Endothelial cell of umbilical vein (primary cell): ENCODE measurements at regions of chr20 and their contacts with region 1.

Region 1: DNA sequence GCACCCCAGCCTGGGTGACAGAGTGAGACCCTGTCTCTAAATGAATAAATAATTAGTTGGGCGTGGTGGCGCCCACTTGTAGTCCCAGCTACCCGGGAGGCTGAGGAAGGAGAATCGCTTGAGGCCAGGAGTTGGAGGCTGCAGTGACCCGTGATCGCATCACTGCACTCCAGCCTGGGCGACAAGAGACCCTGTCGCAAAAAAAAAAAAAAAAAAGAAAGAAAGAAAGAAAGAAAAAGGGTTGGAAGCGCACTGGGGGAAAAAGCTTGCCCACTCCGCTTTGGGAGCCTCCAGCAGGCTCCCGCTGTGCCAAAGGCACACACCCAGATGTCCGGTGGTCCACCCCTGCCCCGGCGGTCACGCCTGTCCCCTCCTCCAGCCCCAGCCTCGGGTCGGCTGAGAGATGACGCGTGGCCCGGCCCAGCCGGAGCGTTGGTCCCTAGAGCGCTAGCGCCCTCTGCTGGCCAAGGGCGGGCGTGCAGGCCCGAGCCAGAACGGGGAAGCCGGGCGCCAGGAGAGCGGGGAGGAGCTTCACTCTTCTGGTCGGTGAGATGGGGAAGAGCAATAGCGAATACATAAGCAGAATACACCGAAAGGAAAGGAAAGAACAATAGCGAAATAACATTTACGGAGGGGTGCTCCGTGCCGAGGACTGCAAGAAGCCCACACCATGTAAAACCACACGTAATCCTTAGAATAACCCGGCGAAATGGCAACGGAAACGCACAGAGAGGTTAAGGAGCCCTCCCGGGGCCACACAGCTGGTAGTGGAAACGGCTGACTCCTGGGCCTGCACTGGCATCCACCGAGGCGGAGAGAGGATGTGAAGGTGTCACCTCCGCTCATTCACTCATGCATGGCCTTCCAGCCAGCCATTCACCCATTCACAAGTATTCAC is 41.7 kb downstream of the UBE2V1 start:
- DNase-seq: peak; percentile 85
- H3K4me3 ChIP-seq: peak overlapping the region in 1 of 3 experiments; percentile 32
- H3K27ac ChIP-seq: no peak overlapping the region
- H3K4me1 ChIP-seq: no peaks in the 10 kb centered on the region
- H3K27me3 ChIP-seq: no peaks in the 10 kb centered on the region
- CTCF ChIP-seq: peak; percentile 99 to 100
- POLR2A ChIP-seq: no peak

Region 2: GRCh38 chr20:49699200-49699992 is 371.8 kb before region 1 on chr20:
- CTCF ChIA-PET with region 1: no interaction called
- POLR2A ChIA-PET with region 1: no interaction called
- dilution Hi-C with region 1: no loop called
- intact Hi-C with region 1: no loop called
- DNase-seq: peak; percentile 57
- H3K4me3 ChIP-seq: no peak overlapping the region
- H3K27ac ChIP-seq: peak overlapping the region; percentile 98
- H3K4me1 ChIP-seq: peaks cover 73% of the 10 kb centered on the region
- H3K27me3 ChIP-seq: no peaks in the 10 kb centered on the region
- CTCF ChIP-seq: no peak
- POLR2A ChIP-seq: no peak

Region 3: GRCh38 chr20:49915378-49916145 is 155.7 kb before region 1 on chr20 and contains the start of gene SPATA2:
- CTCF ChIA-PET with region 1: interaction called, 10 read pairs
- POLR2A ChIA-PET with region 1: no interaction called
- dilution Hi-C with region 1: no loop called
- intact Hi-C with region 1: no loop called
- DNase-seq: peak; percentile 94
- H3K4me3 ChIP-seq: peak within 1 kb of the TSS; percentile 54 to 89 (median 68)
- H3K27ac ChIP-seq: peak within 1 kb of the TSS; percentile 86
- H3K4me1 ChIP-seq: peaks cover 17% of the 10 kb centered on the region
- H3K27me3 ChIP-seq: no peaks in the 10 kb centered on the region
- CTCF ChIP-seq: no peak
- POLR2A ChIP-seq: peak; percentile 83
- total RNA-seq, gene SPATA2: 6.1 TPM in 2 replicates

Region 4: GRCh38 chr20:49964964-49965780 is 106.1 kb before region 1 on chr20:
- CTCF ChIA-PET with region 1: interaction called, 1,187 read pairs
- POLR2A ChIA-PET with region 1: no interaction called
- dilution Hi-C with region 1: no loop called
- intact Hi-C with region 1: no loop called
- DNase-seq: peak; percentile 49
- H3K4me3 ChIP-seq: no peak overlapping the region
- H3K27ac ChIP-seq: no peak overlapping the region
- H3K4me1 ChIP-seq: peaks cover 7% of the 10 kb centered on the region
- H3K27me3 ChIP-seq: no peaks in the 10 kb centered on the region
- CTCF ChIP-seq: peak; percentile 75 to 86
- POLR2A ChIP-seq: no peak

Region 5: GRCh38 chr20:50020288-50020687 is 51.0 kb before region 1 on chr20:
- CTCF ChIA-PET with region 1: interaction called, 11 read pairs
- POLR2A ChIA-PET with region 1: no interaction called
- dilution Hi-C with region 1: no loop called
- intact Hi-C with region 1: no loop called
- DNase-seq: peak; percentile 65
- H3K4me3 ChIP-seq: no peak overlapping the region
- H3K27ac ChIP-seq: peak overlapping the region; percentile 71
- H3K4me1 ChIP-seq: peaks cover 21% of the 10 kb centered on the region
- H3K27me3 ChIP-seq: no peaks in the 10 kb centered on the region
- CTCF ChIP-seq: no peak
- POLR2A ChIP-seq: no peak

Region 6: DNA sequence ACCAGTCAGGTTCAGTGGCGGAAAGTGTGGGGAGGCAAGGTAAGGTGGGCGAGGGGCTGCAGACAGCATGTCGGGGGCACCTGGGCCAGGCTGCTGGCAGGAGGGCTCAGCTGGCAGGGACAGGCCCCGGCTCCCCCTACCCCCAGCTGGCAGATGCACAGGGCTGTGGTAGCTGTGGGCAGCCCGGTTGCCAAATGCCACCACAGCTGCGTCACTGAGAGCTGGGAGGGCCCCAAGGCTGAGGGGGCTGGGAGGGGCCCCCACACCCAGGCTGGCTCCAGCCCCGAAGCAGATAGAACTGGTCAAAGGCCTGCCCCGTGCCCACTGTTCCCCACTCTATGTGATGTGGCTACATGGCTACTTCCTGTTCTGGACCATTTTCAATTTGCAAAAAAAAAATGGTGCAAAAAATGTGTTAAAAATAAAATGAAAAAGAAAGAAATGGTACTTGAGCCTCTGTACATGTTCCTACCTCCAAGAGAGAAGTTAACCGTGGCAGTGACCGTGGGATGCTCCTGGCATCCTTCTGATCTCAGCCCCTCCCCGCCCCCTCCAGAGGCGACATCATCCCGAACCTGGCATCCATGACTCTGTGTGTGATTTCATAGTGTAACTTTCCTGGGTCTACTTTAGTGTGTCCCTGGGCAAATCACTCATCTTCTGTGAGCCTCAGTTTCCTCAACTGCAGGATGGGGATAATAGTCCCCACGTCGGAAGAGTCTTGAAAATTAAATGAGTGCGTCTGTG is 22.6 kb before region 1 on chr20:
- CTCF ChIA-PET with region 1: interaction called, 20 read pairs
- POLR2A ChIA-PET with region 1: no interaction called
- dilution Hi-C with region 1: no loop called
- intact Hi-C with region 1: loop called (anchors 2 kb)
- DNase-seq: no peak
- H3K4me3 ChIP-seq: no peak overlapping the region
- H3K27ac ChIP-seq: peak overlapping the region; percentile 96
- H3K4me1 ChIP-seq: peaks cover 26% of the 10 kb centered on the region
- H3K27me3 ChIP-seq: no peaks in the 10 kb centered on the region
- CTCF ChIP-seq: no peak
- POLR2A ChIP-seq: no peak

Region 7: GRCh38 chr20:50101281-50101680 is 30.0 kb after region 1 on chr20:
- CTCF ChIA-PET with region 1: interaction called, 20 read pairs
- POLR2A ChIA-PET with region 1: no interaction called
- dilution Hi-C with region 1: no loop called
- intact Hi-C with region 1: no loop called
- DNase-seq: no peak
- H3K4me3 ChIP-seq: no peak overlapping the region
- H3K27ac ChIP-seq: no peak overlapping the region
- H3K4me1 ChIP-seq: peaks cover 17% of the 10 kb centered on the region
- H3K27me3 ChIP-seq: no peaks in the 10 kb centered on the region
- CTCF ChIP-seq: no peak
- POLR2A ChIP-seq: no peak

Region 8: GRCh38 chr20:50129662-50130355 is 58.6 kb after region 1 on chr20:
- CTCF ChIA-PET with region 1: no interaction called
- POLR2A ChIA-PET with region 1: no interaction called
- dilution Hi-C with region 1: no loop called
- intact Hi-C with region 1: no loop called
- DNase-seq: no peak
- H3K4me3 ChIP-seq: no peak overlapping the region
- H3K27ac ChIP-seq: no peak overlapping the region
- H3K4me1 ChIP-seq: no peaks in the 10 kb centered on the region
- H3K27me3 ChIP-seq: no peaks in the 10 kb centered on the region
- CTCF ChIP-seq: no peak
- POLR2A ChIP-seq: no peak

Region 9: DNA sequence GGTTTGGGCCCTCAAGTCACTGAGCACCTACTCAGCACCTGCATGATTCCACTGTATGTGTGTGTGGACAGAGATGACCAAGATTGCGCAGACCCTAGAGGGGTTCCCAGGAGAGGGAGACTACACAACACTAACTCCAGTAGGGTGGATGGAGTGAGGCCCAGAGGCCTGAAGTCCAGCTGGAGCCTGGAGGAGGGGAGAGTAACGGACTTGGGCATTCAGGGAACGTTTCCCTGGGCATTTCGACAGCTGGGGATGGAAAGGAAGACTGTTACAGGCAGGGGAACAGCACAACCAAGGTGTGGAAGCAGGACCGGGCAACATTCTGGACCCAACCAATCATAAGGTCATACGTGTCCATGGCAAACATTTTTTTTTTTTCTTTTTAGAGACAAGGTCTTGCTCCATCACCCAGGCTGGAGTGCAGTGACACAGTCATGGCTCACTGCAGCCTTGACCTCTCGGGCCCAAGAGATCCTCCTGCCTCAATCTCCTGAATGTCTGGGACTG is 108.3 kb after region 1 on chr20:
- CTCF ChIA-PET with region 1: interaction called, 14 read pairs
- POLR2A ChIA-PET with region 1: interaction called, 4 read pairs
- dilution Hi-C with region 1: no loop called
- intact Hi-C with region 1: no loop called
- DNase-seq: no peak
- H3K4me3 ChIP-seq: no peak overlapping the region
- H3K27ac ChIP-seq: no peak overlapping the region
- H3K4me1 ChIP-seq: no peaks in the 10 kb centered on the region
- H3K27me3 ChIP-seq: no peaks in the 10 kb centered on the region
- CTCF ChIP-seq: no peak
- POLR2A ChIP-seq: no peak

Region 10: DNA sequence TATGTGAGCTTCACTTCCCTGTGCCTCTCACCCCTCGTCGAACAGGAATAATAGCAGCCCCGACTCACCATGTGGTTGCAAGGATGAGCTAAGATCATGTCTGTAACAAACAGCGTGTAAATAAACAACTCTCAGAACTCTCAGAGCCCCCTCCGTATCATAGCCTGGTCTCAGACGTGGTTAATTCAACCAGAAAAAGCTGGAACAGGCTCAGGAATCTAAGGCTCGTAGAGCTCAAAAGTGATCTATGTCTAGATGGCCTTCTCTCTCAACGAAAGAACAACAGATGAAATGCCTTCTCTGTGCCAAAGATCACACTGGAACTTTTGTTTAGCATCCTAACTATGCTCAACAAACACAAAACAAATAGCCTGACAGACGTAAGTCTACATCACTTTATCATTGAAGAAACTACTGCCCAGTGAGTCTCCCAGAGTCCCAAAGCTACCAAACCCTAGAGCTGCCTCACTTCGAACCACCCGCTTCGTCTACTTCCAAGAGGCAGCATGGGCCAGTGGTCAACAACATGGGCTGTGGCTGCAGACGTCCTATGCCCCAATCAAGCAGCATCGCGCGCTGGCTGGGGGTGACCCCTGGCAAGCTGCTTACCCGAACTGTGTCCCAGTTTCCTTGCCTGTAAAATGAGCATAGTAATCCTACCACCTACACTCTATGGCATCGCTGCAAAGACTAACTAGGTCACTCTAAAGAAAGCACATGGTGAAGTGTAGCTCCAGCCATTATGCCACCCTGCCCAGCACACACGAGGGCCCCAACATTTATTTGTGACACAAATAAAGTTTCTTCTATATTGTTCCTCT is 1436.2 kb after region 1 on chr20:
- CTCF ChIA-PET with region 1: no interaction called
- POLR2A ChIA-PET with region 1: no interaction called
- dilution Hi-C with region 1: no loop called
- intact Hi-C with region 1: no loop called
- DNase-seq: no peak
- H3K4me3 ChIP-seq: no peak overlapping the region
- H3K27ac ChIP-seq: no peak overlapping the region
- H3K4me1 ChIP-seq: no peaks in the 10 kb centered on the region
- H3K27me3 ChIP-seq: no peaks in the 10 kb centered on the region
- CTCF ChIP-seq: no peak
- POLR2A ChIP-seq: no peak